Activated T-helper 2 cell treated with anti-CD3 and anti-CD28 coated beads, Interferon-gamma antibody, Interleukin-2, Interleukin-4, amounts not matched to agents 10 μg/mL and 5 μg/mL and 100 μg/mL, durations not matched to agents 14 hours and 24 hours and 36 hours (primary cell): ENCODE measurements at regions of chr19 and their contacts with region 1.

Region 1: DNA sequence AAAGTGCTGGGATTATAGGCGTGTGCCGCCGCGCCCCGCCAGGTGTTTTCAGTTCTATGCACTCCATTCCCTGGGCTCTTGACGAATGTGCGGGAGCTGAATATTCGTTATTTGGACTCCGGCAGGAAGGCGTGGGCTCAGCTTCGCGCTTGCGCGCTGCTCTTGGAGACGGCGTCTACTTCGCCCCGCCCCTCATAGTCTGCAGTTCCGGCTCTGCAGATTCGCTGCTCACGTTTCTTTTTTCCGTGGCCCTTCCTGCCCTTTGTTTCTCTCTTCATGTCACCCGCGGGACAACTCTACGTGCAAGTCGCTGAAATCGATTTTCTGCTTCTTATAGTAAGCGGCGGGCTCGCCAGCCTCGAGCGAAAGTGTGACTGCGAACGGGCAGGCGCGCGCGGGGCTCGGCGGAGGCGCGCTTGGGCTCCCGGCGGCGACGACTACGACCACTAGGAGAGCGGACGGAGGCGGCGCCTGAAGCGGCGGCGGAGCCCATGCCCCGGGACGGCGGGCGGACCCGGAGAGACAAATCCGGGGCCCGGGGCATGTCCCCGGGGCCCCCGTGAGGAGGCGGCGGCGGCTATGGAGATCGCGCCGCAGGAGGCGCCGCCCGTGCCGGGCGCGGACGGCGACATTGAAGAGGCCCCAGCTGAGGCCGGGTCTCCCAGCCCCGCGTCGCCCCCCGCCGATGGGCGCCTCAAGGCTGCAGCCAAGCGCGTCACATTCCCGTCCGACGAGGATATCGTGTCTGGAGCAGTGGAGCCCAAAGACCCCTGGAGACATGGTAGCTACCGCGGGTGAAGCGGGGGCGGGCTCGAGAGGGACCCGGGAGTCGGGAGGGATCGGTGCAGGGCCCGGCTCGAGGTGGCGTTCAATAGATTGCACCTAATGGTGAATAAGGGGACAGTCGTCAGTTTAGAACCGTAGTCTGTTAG is at the start of gene PPP1R37:
- DNase-seq: peak; percentile 91
- H3K4me3 Mint-ChIP-seq: peak within 1 kb of the TSS; percentile 86
- H3K27ac Mint-ChIP-seq: peak within 1 kb of the TSS; percentile 97
- H3K4me1 Mint-ChIP-seq: peaks cover 38% of the 10 kb centered on the region
- H3K27me3 Mint-ChIP-seq: no peaks in the 10 kb centered on the region
- total RNA-seq, gene PPP1R37: 15.7 and 18.4 TPM in 2 replicates

Region 2: GRCh38 chr19:44890366-44891015 is 202.5 kb before region 1 on chr19:
- intact Hi-C with region 1: loop called (anchors 1 kb)
- DNase-seq: peak; percentile 100
- H3K4me3 Mint-ChIP-seq: peak overlapping the region; percentile 77
- H3K27ac Mint-ChIP-seq: peak overlapping the region; percentile 97
- H3K4me1 Mint-ChIP-seq: peaks cover 19% of the 10 kb centered on the region
- H3K27me3 Mint-ChIP-seq: no peaks in the 10 kb centered on the region

Region 3: GRCh38 chr19:45079063-45079910 is 13.7 kb before region 1 on chr19 and contains the start of gene GEMIN7:
- intact Hi-C with region 1: loop called (anchors 1 kb)
- DNase-seq: peak; percentile 75
- H3K4me3 Mint-ChIP-seq: peak within 1 kb of the TSS; percentile 99
- H3K27ac Mint-ChIP-seq: peak within 1 kb of the TSS; percentile 89
- H3K4me1 Mint-ChIP-seq: peaks cover 33% of the 10 kb centered on the region
- H3K27me3 Mint-ChIP-seq: no peaks in the 10 kb centered on the region
- total RNA-seq, gene GEMIN7: 44.9 and 49.4 TPM in 2 replicates

Region 4: DNA sequence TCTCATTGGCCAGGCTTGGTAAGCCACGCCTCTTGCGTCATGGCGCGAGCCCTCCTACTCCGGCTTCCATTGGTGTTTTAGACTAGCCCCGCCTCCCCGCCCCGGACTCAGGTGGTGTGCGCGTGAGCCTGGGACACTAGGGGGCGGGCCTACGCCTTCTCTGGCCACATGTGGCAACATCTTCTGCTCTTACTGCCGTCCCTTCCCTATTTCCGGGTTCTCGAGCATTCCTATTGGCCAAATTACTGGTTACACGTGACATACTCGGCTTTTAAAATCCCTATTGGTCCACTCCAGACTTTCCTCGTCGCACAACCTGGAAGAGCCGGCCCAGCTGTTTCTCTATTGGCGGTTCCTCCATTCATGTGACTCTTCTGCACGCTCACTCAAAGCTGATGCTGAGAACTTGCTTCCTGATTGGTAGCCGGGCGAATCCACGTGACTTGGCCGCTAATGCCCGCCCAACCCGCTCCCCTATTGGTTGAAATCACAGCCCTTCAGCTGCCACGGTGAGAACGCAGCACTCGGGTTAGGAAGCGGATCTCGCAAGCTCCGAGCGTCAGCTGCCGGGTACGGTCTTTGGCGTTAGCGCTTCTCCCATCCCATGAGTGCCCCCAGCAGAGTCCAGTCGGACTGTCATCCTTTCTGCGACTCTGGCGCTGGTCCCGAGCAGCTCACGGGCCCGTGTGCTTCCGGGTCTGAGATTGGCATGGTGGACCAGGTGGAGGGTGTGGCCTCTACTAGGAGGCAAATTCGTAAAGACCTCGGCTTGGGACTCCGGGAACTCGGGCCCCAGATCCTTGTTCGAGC is 85.5 kb after region 1 on chr19 and contains the start of gene BLOC1S3:
- intact Hi-C with region 1: loop called (anchors 2 kb)
- DNase-seq: peak; percentile 100
- H3K4me3 Mint-ChIP-seq: peak within 1 kb of the TSS; percentile 86
- H3K27ac Mint-ChIP-seq: peak within 1 kb of the TSS; percentile 90
- H3K4me1 Mint-ChIP-seq: peaks cover 17% of the 10 kb centered on the region
- H3K27me3 Mint-ChIP-seq: no peaks in the 10 kb centered on the region
- total RNA-seq, gene BLOC1S3: 9.7 and 10.8 TPM in 2 replicates

Region 5: GRCh38 chr19:45405435-45406225 is 312.6 kb after region 1 on chr19:
- intact Hi-C with region 1: loop called (anchors 5 kb)
- DNase-seq: peak; percentile 77
- H3K4me3 Mint-ChIP-seq: peak overlapping the region; percentile 99
- H3K27ac Mint-ChIP-seq: peak overlapping the region; percentile 92
- H3K4me1 Mint-ChIP-seq: peaks cover 37% of the 10 kb centered on the region
- H3K27me3 Mint-ChIP-seq: peaks cover 11% of the 10 kb centered on the region

Region 6: DNA sequence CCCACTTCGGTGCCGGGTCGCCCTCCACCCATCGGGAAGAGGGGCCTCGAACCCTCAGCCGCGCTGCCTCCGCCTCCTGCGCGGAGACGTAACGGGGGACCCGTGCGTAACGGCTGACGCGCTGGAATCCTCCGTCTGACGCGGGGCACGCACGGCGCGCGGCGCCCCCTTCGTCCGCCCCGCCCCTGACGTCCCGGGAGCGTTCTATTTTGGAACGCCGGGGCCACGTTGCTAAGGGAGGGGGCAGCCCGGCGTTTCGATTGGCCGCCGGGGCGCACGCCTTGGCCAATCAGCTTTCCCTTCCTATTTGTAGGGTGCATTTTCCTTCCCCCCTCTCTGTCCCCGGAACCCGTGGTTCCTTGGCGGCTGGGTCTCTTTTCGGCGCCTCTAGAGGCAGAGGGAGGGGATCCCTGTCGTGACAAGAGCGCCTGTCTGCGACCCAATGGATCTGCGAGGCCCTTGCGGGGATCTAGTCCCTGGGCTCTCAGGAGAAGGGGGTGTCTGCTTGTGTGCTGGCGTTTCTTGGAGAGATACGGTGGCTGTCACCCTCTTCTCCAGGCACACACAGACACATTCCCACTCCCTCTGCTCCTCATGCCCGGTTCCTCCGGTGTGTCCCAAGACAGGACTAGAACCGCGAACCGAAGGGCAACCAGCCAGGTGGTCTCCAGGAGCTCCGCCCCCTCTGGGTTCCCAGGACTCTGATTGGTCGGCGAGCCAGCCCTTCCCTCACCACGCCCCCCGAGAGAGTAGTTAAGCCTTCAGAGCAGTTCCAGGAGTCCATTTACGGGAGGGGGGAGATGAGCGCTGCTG is 376.3 kb after region 1 on chr19:
- intact Hi-C with region 1: loop called (anchors 5 kb)
- DNase-seq: peak; percentile 93
- H3K4me3 Mint-ChIP-seq: peak overlapping the region; percentile 86
- H3K27ac Mint-ChIP-seq: peak overlapping the region; percentile 91
- H3K4me1 Mint-ChIP-seq: peaks cover 23% of the 10 kb centered on the region
- H3K27me3 Mint-ChIP-seq: peaks cover 44% of the 10 kb centered on the region

Region 7: DNA sequence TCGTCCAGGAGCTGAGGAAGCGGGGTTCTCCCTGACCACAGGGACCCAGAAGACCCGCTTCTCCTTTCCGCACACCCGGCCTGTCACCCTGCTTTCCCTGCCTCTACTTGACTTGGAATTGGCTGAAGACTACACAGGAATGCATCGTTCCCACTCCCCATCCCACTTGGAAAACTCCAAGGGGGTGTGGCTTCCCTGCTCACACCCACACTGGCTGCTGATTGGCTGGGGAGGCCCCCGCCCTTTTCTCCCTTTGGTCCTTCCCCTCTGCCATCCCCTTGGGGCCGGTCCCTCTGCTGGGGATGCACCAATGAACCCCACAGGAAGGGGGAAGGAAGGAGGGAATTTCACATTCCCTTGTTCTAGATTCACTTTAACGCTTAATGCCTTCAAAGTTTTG is 433.1 kb after region 1 on chr19:
- intact Hi-C with region 1: no loop called
- DNase-seq: no peak
- H3K4me3 Mint-ChIP-seq: no peak overlapping the region
- H3K27ac Mint-ChIP-seq: no peak overlapping the region
- H3K4me1 Mint-ChIP-seq: peaks cover 16% of the 10 kb centered on the region
- H3K27me3 Mint-ChIP-seq: no peaks in the 10 kb centered on the region